ENCODE measurements at regions of chr19 and their contacts with region 1.

Region 1: DNA sequence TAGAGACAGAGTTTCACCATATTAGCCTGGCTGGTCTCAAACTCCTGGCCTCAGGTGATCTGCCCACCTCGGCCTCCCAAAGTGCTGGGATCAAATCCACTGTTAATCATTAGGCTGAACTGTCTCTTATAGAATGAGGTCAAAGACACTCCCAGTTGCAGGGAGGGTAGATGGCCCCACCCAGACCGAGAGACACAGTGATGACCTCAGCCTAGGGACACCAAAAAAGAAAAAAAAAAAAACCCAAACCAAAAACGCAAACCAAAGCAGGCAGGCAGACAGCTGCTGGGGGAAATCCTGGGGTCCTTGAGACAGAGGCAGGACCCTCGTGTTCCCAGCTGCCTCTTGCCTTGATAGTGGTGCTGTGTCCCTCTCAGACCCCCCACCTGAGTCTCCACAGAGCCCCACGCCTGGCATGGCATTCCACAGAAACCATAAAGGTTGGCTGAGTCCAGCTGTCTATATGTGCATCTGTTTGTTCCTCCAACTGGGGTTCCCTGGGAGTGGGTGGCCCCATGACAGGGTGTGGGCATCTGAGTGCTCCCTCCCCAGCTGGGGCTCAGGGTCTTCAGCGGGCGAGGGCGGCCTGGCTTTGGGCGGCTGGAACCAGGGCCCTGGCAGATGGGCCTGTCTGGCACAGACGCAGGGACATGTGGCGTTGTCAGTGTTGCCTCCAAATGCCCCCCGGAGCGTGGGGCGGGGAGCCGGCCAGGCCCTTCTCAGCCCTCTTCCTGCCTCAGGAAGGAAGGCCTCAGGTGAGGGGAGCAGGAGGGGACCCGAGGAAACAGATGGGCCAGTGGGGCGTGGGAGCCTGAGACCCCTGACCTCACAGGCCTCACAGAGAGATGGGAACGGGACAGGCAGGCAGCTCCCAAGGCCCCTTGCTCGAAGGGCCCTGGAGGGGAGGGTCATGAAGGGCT is 5.2 kb downstream of the DAND5 start:
- DNase-seq: peak; percentile 78
- H3K4me3 ChIP-seq: no peak overlapping the region
- H3K27ac ChIP-seq: peak overlapping the region in 1 of 2 experiments; percentile 92; a peak in 2 of 4 replicates
- H3K4me1 ChIP-seq: peaks cover 2 to 27% of the 10 kb centered on the region in 2 experiments; a peak in 2 of 4 replicates
- H3K27me3 ChIP-seq: no peaks in the 10 kb centered on the region
- CTCF ChIP-seq: no peak
- EP300 ChIP-seq: peak in 1 of 2 experiments; percentile 84; a peak in 2 of 4 replicates
- RAD21 ChIP-seq: peak; percentile 28

Region 2: DNA sequence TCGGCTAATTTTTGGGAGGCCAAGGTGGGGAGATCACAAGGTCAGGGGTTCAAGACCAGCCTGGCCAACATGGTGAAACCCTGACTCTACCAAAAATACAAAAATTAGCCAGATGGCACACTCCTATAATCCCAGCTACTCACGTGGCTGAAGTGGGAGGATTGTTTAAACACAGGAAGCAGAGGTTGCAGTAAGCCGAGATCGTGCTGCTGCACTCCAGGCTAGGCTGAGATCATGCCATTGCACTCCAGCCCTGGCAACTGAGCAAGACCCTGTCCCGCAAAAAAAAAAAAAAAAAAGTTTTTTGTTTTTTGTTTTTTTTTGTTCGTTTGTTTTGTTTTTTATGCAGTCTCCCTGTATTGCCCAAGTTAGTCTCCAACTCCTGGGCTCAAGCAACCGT is 115.0 kb before region 1 on chr19:
- CTCF ChIA-PET with region 1: no interaction called
- POLR2A ChIA-PET with region 1: no interaction called
- DNase-seq: no peak
- H3K4me3 ChIP-seq: no peak overlapping the region
- H3K27ac ChIP-seq: no peak overlapping the region
- H3K4me1 ChIP-seq: no peaks in the 10 kb centered on the region
- H3K27me3 ChIP-seq: no peaks in the 10 kb centered on the region
- CTCF ChIP-seq: no peak
- EP300 ChIP-seq: no peak
- RAD21 ChIP-seq: no peak

Region 3: DNA sequence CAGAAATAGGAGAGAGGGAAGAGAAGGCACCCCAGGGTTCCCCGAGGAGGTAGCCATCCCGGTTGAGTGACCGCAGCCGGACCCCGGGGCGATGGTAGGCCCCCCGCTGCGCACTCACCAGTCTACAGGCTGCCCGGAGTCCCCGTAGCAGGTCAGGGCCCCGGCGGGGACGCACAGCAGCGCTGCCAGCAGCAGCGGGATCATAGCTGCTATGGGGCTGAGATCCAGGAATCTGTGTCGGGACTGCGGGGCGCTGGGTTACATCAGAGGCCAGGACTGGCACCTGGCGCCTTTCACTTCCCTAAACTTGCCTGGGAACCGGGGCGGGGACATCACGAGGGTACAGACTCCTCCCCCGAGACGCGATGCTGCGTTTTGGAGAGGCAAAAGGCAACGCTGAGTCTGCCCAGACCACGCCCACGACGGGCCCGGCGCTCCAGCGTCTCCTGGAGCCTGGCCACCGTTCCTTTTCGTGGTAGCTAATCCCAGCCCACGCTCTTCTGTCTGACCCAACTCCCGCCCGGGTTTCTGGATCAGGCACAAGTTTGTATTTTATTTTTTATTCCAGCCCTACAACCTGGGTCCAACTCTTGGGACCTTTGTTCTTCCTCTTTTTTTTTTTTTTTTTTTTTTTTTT is 93.3 kb before region 1 on chr19 and contains the start of gene DNASE2:
- CTCF ChIA-PET with region 1: no interaction called
- POLR2A ChIA-PET with region 1: no interaction called
- DNase-seq: peak; percentile 95
- H3K4me3 ChIP-seq: peak within 1 kb of the TSS; percentile 68 to 86
- H3K27ac ChIP-seq: peak within 1 kb of the TSS; percentile 71 to 76
- H3K4me1 ChIP-seq: peaks cover 0 to 9% of the 10 kb centered on the region in 2 experiments; a peak in 1 of 4 replicates
- H3K27me3 ChIP-seq: peaks cover 11% of the 10 kb centered on the region; the same call in 1 of the 2 replicates
- CTCF ChIP-seq: no peak
- EP300 ChIP-seq: no peak
- RAD21 ChIP-seq: no peak
- polyA plus RNA-seq, gene DNASE2: 29.8 and 40.7 TPM in 2 replicates

Region 4: DNA sequence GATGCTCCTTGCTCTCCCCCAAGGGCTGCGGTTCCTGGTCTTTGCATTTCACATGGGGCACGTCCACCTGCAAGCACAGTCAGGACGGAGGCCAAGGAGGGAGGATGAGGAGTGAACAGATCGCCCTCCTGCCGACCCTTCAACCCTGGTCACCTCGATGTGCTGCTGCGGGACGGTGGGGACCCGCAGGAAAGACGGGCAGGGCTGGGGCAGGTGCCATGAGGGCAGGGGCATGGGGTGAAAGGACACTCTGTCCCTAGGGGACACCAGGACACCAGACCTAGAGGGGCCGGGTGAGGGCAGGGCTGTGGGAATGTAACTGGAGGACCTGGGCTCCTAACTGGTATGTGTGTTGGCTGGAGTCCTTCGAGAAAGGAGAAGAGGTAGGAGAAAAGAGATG is 56.3 kb before region 1 on chr19:
- CTCF ChIA-PET with region 1: no interaction called
- POLR2A ChIA-PET with region 1: no interaction called
- DNase-seq: no peak
- H3K4me3 ChIP-seq: no peak overlapping the region
- H3K27ac ChIP-seq: no peak overlapping the region
- H3K4me1 ChIP-seq: peaks cover 0 to 10% of the 10 kb centered on the region in 2 experiments; a peak in 1 of 4 replicates
- H3K27me3 ChIP-seq: no peaks in the 10 kb centered on the region
- CTCF ChIP-seq: no peak
- EP300 ChIP-seq: no peak
- RAD21 ChIP-seq: no peak

Region 5: GRCh38 chr19:13022859-13023636 is 48.5 kb after region 1 on chr19:
- CTCF ChIA-PET with region 1: interaction called, 14 read pairs
- POLR2A ChIA-PET with region 1: no interaction called
- DNase-seq: peak; percentile 87
- H3K4me3 ChIP-seq: peak overlapping the region; percentile 36 to 67
- H3K27ac ChIP-seq: peak overlapping the region; percentile 82 to 91
- H3K4me1 ChIP-seq: peaks cover 31 to 57% of the 10 kb centered on the region in 2 experiments
- H3K27me3 ChIP-seq: no peaks in the 10 kb centered on the region
- CTCF ChIP-seq: peak; percentile 19; the same call in 1 of the 2 replicates
- EP300 ChIP-seq: peak in 1 of 2 experiments; percentile 22; a peak in 2 of 4 replicates
- RAD21 ChIP-seq: no peak

Region 6: DNA sequence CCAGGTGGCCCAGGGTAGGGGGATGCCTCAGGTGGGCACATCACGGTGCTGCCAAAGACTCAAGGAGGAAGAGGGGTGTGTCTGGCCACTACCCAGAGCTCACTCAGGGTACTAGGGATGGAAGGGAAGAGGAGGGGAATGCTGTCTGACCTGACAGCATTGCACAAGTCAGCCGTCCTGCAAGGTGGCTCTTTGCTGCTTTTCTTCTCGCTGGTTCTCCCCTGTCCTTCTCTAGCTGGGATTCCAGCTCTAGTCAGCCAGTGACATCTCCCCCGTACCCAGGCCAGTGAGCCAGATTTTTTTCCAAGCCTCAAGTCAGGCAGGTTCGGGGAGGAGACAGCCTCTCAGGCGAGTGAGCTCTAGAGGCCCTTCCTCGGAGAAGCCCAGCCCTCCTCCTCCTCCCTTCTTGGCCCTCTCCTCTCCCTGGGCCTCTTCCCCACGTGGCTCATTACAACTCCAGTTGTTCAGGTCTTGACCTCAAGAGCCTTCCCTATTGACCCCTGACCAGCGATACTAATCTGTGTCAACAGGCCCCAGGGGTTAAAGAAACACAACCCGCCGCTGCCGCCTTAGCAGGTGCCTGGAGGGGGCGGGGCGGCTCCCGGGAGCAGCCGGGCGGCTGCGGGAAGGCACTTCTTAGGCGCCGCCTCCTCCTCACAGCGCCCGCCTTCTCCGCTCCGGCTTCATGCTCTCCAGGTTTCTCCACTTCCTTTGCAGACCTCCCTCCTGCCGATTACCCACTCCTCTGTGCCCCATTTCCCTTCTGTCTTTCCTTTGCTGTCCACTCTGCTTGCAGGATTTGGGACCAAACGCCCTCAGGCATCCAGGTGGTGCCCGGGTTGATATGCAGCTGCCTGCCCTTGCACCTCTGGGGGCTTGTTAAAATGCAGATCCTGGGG is 77.0 kb after region 1 on chr19:
- CTCF ChIA-PET with region 1: interaction called, 369 read pairs
- POLR2A ChIA-PET with region 1: interaction called, 11 read pairs
- DNase-seq: no peak
- H3K4me3 ChIP-seq: no peak overlapping the region
- H3K27ac ChIP-seq: peak overlapping the region; percentile 100; a peak in 1 of 4 replicates
- H3K4me1 ChIP-seq: peaks cover 59 to 67% of the 10 kb centered on the region in 2 experiments
- H3K27me3 ChIP-seq: no peaks in the 10 kb centered on the region
- CTCF ChIP-seq: no peak
- EP300 ChIP-seq: no peak
- RAD21 ChIP-seq: no peak

Region 7: DNA sequence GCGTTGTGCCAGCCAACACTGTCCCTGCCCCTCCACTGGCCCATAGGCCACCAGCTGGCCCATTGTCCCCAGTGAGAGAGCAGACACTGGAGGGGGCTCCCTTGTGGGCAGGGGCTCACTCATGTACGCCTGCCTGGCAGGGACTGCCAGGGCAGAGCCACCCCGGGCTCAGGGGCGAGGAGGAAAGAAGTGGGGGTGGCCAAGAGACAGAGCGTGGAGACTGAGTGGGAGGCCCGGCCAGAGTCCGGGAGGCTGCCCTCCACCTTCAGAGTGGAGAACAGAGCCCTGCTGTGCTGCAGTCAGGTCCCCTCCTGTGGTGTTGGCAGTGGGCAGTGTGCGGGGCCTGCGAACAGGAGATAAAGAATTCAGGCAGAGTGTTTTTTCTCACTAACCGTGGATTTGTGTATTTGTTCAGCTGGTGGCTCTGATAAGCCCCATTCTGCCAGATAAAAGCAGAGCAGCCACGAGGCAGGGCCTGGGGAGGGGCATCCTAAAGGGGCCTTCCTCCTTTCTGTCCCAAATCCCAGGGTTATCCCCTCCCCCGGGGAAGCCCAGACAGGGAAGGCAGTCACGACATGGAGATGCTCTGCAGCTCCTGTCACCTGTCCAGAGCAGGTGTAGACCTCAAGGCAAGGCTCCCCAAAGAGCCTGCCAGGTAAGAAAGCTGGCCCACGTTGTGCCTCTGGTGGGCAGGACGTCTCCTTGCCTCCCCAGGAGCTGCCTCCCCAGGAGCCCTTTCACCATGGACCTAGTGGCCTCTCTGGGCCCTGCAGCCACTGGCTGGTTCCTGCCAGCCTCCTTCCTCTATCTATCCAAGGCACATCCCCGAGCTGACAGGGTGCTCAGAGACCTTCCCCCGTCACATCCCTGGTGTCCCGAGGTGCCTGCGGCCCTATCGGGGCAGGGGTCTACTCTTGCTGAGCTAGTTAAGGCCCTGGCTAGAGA is 95.1 kb after region 1 on chr19:
- CTCF ChIA-PET with region 1: interaction called, 369 read pairs
- POLR2A ChIA-PET with region 1: interaction called, 5 read pairs
- DNase-seq: peak; percentile 76
- H3K4me3 ChIP-seq: no peak overlapping the region
- H3K27ac ChIP-seq: peak overlapping the region in 1 of 2 experiments; percentile 92; a peak in 2 of 4 replicates
- H3K4me1 ChIP-seq: peaks cover 0 to 70% of the 10 kb centered on the region in 2 experiments; a peak in 1 of 4 replicates
- H3K27me3 ChIP-seq: no peaks in the 10 kb centered on the region
- CTCF ChIP-seq: no peak
- EP300 ChIP-seq: peak in 1 of 2 experiments; percentile 50; a peak in 2 of 4 replicates
- RAD21 ChIP-seq: 0 out of 2 replicates have a peak, but pooled peaks have one; percentile 10

Region 8: GRCh38 chr19:13082192-13083007 is 107.8 kb after region 1 on chr19:
- CTCF ChIA-PET with region 1: interaction called, 24 read pairs
- POLR2A ChIA-PET with region 1: interaction called, 3 read pairs
- DNase-seq: peak; percentile 66
- H3K4me3 ChIP-seq: no peak overlapping the region
- H3K27ac ChIP-seq: peak overlapping the region in 1 of 2 experiments; percentile 23; a peak in 2 of 4 replicates
- H3K4me1 ChIP-seq: peaks cover 10 to 33% of the 10 kb centered on the region in 2 experiments; a peak in 3 of 4 replicates
- H3K27me3 ChIP-seq: no peaks in the 10 kb centered on the region
- CTCF ChIP-seq: peak; percentile 23
- EP300 ChIP-seq: no peak
- RAD21 ChIP-seq: peak; percentile 61

Region 9: DNA sequence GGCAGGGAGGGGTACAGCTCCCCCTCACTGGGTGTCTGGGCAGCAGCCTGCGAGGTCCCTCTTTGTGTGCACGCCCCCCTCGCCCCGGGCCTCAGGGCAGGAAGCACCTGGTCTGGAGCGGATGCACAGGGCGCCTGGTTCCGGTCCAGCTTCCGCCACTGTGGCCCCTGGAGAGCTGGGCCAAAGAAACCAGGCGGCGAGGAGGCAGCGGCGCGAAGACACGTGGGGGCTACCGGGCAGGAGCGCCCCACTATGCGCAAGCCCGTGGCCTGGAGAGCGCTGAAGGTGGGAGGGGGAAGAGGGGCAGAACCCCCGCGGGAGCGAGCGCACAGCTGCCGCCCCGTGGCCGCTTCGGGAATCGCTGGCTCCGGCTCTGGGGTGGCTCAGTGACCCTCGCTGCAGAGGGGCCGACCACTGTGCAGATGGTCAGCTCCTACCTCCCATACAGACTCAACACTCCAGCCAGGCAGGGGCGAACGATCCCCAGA is 129.8 kb after region 1 on chr19:
- CTCF ChIA-PET with region 1: interaction called, 16 read pairs
- POLR2A ChIA-PET with region 1: no interaction called
- DNase-seq: peak; percentile 81
- H3K4me3 ChIP-seq: no peak overlapping the region
- H3K27ac ChIP-seq: no peak overlapping the region
- H3K4me1 ChIP-seq: peaks cover 0 to 24% of the 10 kb centered on the region in 2 experiments; a peak in 3 of 4 replicates
- H3K27me3 ChIP-seq: no peaks in the 10 kb centered on the region
- CTCF ChIP-seq: peak; percentile 54
- EP300 ChIP-seq: no peak
- RAD21 ChIP-seq: peak; percentile 32; the same call in 1 of the 2 replicates

Region 10: GRCh38 chr19:13262450-13262849 is 287.9 kb after region 1 on chr19:
- CTCF ChIA-PET with region 1: interaction called, 13 read pairs
- POLR2A ChIA-PET with region 1: interaction called, 3 read pairs
- DNase-seq: peak; percentile 66
- H3K4me3 ChIP-seq: no peak overlapping the region
- H3K27ac ChIP-seq: no peak overlapping the region
- H3K4me1 ChIP-seq: peaks cover 0 to 3% of the 10 kb centered on the region in 2 experiments; a peak in 2 of 4 replicates
- H3K27me3 ChIP-seq: peaks cover 55% of the 10 kb centered on the region; the same call in 1 of the 2 replicates
- CTCF ChIP-seq: peak; percentile 73
- EP300 ChIP-seq: no peak
- RAD21 ChIP-seq: peak; percentile 71